ENCODE measurements at regions of chr4 and their contacts with region 1.

Region 1: DNA sequence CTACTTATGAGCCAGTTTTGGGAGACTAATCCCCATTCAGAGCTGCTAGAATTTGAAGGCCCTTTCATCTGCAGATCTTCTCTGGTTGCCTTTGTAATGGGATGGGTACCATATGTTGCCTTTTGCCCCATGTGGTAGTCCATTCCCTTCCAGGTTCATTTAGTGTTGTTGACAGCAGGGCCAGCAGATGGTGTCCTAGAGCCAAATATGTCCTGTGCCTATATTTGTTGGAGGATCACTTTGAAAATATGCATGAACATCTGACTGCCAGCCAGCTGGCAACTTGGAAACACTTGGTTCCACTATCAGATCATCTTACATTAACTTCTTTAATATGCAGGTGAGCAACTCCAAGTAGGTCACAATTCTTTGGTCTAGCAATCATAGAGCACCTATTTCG is 30.4 kb downstream of the CFAP299 start:
- DNase-seq: peak in 2 of 3 donors; percentile 46 to 77
- ATAC-seq: peak; percentile 81
- H3K4me3 ChIP-seq: no peak overlapping the region
- H3K4me1 ChIP-seq: no peaks in the 10 kb centered on the region
- CTCF ChIP-seq: no peak

Region 2: DNA sequence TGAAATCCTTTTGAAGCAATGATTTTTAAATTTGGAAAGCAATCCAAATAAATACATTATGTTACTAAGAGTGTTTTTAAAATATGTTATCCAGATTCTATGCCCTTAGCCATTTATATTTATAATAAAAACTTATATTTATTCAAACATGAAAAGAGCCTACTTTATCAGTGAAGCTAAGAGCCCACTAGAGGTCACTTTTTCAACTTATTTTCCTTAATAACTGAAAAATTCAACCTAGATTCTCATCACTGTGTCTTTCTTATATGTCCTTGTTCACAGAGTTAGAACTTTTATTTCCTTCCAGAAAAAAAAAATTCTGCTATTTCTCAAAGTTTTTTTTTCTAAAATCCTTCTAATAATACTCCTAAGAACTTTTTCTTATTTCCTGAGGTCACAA is 144.8 kb before region 1 on chr4:
- intact Hi-C with region 1: no loop called
- DNase-seq: no peak
- ATAC-seq: no peak
- H3K4me3 ChIP-seq: no peak overlapping the region
- H3K4me1 ChIP-seq: no peaks in the 10 kb centered on the region
- CTCF ChIP-seq: no peak

Region 3: DNA sequence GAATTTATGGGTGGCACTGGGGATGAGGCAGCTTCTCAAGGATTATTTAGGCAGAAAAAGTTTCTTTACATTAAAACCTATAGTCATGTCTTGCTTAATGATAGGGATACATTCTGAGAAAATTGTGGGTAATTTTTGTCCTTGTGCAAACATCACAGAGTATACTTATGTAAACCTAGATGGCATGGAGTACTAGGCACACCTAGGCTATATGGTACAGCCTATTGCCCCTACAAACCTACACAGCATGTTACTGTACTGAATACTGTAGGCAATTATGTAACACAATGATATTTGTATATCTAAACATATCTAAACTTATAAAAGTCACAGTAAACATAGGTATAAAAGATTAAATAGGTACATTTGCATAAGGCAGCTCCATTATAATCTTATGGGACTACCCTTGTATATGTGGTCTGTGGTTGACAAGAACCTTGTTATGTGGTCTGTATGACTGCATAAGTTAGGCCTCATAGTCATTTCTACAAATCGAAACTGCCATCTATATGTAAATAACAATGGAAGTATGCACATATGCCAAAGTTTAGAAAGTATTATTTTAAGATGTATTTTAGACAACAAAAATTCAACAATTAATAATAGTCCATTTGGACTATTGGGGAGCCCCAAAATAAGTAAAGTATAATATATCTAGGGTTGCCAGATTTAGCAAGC is 56.9 kb after region 1 on chr4:
- intact Hi-C with region 1: no loop called
- DNase-seq: no peak
- ATAC-seq: peak; percentile 44
- H3K4me3 ChIP-seq: no peak overlapping the region
- H3K4me1 ChIP-seq: no peaks in the 10 kb centered on the region
- CTCF ChIP-seq: no peak

Region 4: GRCh38 chr4:80566203-80566872 is 200.4 kb after region 1 on chr4:
- intact Hi-C with region 1: no loop called
- DNase-seq: no peak
- ATAC-seq: peak; percentile 66
- H3K4me3 ChIP-seq: no peak overlapping the region
- H3K4me1 ChIP-seq: no peaks in the 10 kb centered on the region
- CTCF ChIP-seq: no peak

Region 5: GRCh38 chr4:80989921-80990544 is 624.1 kb after region 1 on chr4:
- intact Hi-C with region 1: loop called (anchors 5 to 10 kb)
- DNase-seq: peak in 1 of 3 donors; percentile 72
- ATAC-seq: peak; percentile 81
- H3K4me3 ChIP-seq: no peak overlapping the region
- H3K4me1 ChIP-seq: no peaks in the 10 kb centered on the region
- CTCF ChIP-seq: no peak

Region 6: DNA sequence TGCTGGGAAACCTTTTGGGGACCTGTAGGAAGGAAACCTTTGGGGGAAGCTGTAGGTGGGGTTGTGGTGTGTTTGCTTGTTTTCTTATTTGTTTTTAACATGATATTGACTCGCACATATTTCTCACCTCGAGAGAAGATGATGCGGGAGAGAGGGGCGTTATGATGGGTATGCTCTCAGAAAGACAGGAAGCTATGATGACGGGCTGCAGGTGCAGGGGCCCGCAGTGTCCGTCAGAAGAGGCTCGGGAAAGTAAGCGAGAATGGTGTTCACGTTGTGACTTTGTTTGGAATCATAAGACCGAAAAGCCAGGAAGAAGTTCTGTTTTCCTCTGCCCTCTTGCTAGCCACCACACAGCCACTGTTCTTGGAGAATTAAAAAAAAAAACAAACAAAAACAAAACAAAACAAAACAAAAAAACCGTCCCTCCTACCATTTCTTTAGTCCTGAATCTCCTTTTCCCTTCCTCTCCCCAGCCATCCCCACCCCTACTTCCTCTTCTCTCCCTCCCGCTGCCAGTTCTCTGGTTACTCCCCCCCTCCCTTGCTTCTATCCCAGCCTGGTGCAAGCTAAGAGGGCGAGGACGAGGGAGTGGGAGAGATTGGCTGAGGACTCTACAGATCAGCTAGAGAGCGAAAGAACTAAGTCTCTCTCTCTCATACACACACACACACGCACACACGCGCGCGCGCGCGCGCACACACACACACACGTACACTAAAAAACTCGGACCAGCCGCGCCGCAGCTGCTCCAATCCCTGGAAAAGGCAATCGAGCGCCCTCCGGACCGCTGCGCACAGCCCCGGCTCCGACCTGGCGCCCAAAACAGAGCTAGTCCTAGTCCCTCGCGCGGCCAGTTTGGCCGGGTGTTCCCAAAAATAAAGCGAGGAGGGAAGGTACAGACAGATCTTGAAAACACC is 664.4 kb after region 1 on chr4 and contains the start of gene BMP3:
- intact Hi-C with region 1: loop called (anchors 10 kb)
- DNase-seq: peak; percentile 57 to 75 (median 74)
- ATAC-seq: peak; percentile 76
- H3K4me3 ChIP-seq: peak within 1 kb of the TSS; percentile 25
- H3K4me1 ChIP-seq: peaks cover 8% of the 10 kb centered on the region
- CTCF ChIP-seq: no peak
- total RNA-seq, gene BMP3: 20.9 to 67.9 (median 39.6) TPM